MCF 10A (cell line): ENCODE measurements at regions of chr7 and their contacts with region 1.

Region 1: GRCh38 chr7:54773472-54774399 is 14.7 kb upstream of the SEC61G start:
- DNase-seq: peak; percentile 90
- H3K4me3 Mint-ChIP-seq: peak overlapping the region; percentile 75
- H3K27ac Mint-ChIP-seq: peak overlapping the region; percentile 75
- H3K4me1 Mint-ChIP-seq: peaks cover 13% of the 10 kb centered on the region
- H3K27me3 Mint-ChIP-seq: no peaks in the 10 kb centered on the region
- CTCF ChIP-seq: peak; percentile 80

Region 2: DNA sequence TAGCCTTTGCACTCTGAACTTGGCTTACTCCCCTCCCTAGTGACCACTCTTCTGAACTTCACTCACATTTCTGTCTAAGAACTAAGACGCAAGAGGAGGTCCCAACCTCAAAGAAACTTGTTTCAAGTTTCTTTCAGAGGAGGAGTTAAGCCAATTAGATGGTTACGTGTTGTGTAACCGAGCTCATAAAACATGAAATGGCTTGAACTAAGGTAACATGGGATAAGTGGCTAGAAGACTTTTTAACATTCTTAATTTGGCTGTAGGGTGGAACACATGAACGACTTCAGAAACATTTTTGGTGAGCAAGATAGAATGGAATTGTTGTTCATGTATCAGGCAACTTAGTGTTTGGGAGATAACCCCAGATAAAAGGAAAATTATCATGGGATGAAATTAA is 24.8 kb after region 1 on chr7:
- CTCF ChIA-PET with region 1: interaction called, 15 read pairs
- POLR2A ChIA-PET with region 1: no interaction called
- intact Hi-C with region 1: no loop called
- DNase-seq: no peak
- H3K4me3 Mint-ChIP-seq: no peak overlapping the region
- H3K27ac Mint-ChIP-seq: no peak overlapping the region
- H3K4me1 Mint-ChIP-seq: peaks cover 9% of the 10 kb centered on the region
- H3K27me3 Mint-ChIP-seq: no peaks in the 10 kb centered on the region
- CTCF ChIP-seq: no peak

Region 3: GRCh38 chr7:55053651-55054571 is 280.2 kb after region 1 on chr7:
- CTCF ChIA-PET with region 1: interaction called, 10 read pairs
- POLR2A ChIA-PET with region 1: no interaction called
- intact Hi-C with region 1: no loop called
- DNase-seq: peak; percentile 57
- H3K4me3 Mint-ChIP-seq: peak overlapping the region; percentile 58
- H3K27ac Mint-ChIP-seq: peak overlapping the region; percentile 95
- H3K4me1 Mint-ChIP-seq: peaks cover 80% of the 10 kb centered on the region
- H3K27me3 Mint-ChIP-seq: no peaks in the 10 kb centered on the region
- CTCF ChIP-seq: no peak

Region 4: DNA sequence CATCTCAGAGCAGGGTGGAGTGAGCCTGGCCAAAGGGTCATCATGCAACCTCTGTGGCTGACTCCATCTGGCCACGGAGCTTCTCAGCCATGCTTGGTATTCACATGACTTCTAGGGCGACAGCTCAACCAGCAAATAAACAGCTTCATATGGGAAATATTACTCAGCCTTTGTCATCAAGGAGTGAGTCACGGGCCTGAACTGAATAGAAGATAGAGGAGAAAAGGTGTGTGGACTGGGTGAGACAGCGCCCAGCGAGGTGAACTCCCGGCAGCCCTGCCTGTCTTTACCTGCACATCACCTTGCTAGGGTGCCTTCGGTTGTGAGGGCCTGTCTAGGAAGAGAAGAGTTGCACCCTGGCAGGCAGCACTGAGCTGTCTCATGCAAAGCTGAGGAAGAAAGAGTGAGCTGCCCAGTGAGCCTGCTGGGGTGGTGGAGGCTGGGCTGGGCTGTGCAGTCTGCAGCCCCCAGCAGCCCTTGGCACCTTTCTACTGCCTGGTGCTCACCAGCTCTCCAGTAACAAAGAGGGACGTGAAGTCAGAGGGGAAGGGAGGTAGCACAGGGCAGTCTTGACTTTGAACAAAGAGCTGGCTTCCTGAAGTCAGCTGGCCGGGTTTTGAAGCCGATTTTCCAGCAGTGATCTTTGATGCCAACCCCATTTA is 359.3 kb after region 1 on chr7:
- CTCF ChIA-PET with region 1: interaction called, 4 read pairs
- POLR2A ChIA-PET with region 1: interaction called, 3 read pairs
- intact Hi-C with region 1: loop called (anchors 2 kb)
- DNase-seq: peak; percentile 97
- H3K4me3 Mint-ChIP-seq: peak overlapping the region; percentile 44
- H3K27ac Mint-ChIP-seq: peak overlapping the region; percentile 90
- H3K4me1 Mint-ChIP-seq: peaks cover 54% of the 10 kb centered on the region
- H3K27me3 Mint-ChIP-seq: no peaks in the 10 kb centered on the region
- CTCF ChIP-seq: no peak

Region 5: DNA sequence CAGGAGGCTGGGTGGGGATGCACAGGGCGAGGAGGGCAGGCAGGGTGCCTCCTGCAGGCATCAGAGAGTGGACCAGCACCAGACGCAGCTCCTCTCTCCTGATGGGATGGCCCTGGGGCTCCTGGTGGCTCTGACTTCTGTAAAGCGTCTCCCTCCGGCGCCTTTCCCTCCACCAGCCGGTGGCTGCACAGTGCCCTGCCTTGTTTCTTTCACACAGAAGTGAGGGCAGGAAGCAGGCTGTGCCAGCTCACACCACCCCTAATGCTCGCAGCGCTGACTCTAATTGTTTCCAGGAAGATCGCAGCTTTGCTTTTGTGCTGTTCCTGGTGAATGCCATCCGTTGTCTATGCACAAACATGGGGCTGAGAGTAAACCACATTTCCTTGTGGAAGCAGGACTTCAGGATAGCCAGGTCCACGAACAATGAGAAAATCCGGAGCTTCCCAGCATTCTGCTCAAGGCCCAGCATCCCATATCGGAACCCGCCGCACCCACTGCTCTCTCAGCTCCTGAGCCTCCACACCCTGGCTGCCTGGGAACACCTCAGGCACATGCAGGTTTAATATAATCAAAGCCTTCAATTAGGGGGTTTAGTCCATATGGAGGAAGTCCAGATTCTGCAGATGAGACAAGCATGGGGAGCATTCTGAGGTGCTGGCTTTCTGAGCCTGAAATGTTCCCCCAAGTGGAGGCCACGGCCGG is 439.3 kb after region 1 on chr7:
- CTCF ChIA-PET with region 1: interaction called, 20 read pairs
- POLR2A ChIA-PET with region 1: no interaction called
- intact Hi-C with region 1: no loop called
- DNase-seq: no peak
- H3K4me3 Mint-ChIP-seq: no peak overlapping the region
- H3K27ac Mint-ChIP-seq: no peak overlapping the region
- H3K4me1 Mint-ChIP-seq: no peaks in the 10 kb centered on the region
- H3K27me3 Mint-ChIP-seq: no peaks in the 10 kb centered on the region
- CTCF ChIP-seq: no peak

Region 6: GRCh38 chr7:55265836-55266642 is 492.3 kb after region 1 on chr7:
- CTCF ChIA-PET with region 1: interaction called, 13 read pairs
- POLR2A ChIA-PET with region 1: no interaction called
- intact Hi-C with region 1: no loop called
- DNase-seq: no peak
- H3K4me3 Mint-ChIP-seq: no peak overlapping the region
- H3K27ac Mint-ChIP-seq: no peak overlapping the region
- H3K4me1 Mint-ChIP-seq: no peaks in the 10 kb centered on the region
- H3K27me3 Mint-ChIP-seq: peaks cover 43% of the 10 kb centered on the region
- CTCF ChIP-seq: no peak